HEK293 (cell line): ENCODE measurements at regions of chr1 and their contacts with region 1.

Region 1: DNA sequence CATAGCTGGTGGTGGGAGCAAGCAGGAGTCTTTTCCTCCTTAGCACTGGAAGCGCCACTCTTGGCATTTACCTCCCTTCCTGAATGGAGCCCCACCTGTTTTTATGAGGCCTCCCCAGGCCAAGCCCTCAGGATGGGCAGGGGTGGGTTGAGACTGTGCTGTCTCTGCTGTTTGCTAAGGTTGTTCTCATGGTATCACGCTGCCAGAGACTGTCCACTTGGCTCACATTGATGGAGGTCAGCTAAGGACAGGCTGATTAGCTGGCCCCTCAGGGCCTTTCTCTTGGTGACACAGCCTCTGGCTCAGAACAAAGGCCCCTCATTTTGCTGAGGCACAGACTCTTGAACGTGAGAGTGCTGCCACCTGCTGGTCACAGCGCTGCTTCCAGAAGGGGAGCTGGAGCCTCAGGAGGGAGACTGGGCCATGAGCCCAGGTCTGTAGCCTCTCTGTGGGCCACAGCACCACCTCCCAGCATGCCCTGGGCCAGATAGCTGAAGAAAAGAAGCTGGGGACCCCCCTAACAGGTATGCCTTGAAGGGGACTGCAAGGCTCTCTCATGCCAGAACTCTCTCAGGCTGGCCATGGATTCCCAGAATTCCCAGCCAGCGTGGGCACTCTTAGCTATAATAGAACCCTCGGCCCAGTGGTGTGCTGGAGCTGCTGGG is 85.6 kb downstream of the CD58 start:
- H3K4me3 ChIP-seq: no peak overlapping the region
- H3K27ac ChIP-seq: no peak overlapping the region
- H3K4me1 ChIP-seq: no peaks in the 10 kb centered on the region
- CTCF ChIP-seq: peak; percentile 80

Region 2: DNA sequence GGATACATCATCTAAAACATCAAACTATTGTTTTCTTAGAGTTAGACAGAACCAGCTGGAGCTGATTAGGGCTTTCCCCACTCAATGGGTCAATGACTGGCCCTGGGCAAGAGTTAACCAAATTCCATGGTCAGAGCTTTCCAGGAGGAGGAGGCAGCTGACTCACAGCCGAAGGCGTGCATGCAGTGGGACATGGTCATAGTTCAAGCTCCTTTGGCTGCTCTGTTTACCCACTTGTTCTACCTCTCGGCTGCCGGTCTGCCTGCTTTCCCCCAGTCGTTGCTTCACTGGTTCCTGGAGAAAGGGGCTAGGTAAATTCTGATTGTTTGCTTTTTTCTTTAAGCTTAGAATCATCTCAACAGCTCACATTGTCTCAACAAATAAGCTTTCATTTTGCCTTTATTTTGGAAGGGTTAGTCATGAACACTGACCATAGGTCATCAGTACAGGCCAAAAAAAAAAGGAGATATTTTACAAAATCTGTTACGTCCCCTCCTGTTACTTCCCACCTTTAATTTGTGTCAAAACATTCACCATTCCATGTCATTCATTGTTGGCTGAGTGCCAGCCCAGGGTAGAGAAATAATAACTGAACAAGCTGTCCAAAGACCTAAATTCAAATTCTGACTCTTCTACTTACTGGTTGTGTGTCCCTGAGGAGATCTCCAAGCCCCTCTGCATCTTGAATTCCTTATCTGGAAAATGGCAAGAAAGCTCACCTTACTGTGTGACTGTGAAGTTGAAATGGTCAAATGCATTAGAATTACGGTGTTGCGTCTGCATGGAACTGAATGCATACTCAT is 362.0 kb before region 1 on chr1:
- CTCF ChIA-PET with region 1: interaction called, 22 read pairs
- POLR2A ChIA-PET with region 1: no interaction called
- H3K4me3 ChIP-seq: no peak overlapping the region
- H3K27ac ChIP-seq: no peak overlapping the region
- H3K4me1 ChIP-seq: no peaks in the 10 kb centered on the region
- CTCF ChIP-seq: no peak

Region 3: DNA sequence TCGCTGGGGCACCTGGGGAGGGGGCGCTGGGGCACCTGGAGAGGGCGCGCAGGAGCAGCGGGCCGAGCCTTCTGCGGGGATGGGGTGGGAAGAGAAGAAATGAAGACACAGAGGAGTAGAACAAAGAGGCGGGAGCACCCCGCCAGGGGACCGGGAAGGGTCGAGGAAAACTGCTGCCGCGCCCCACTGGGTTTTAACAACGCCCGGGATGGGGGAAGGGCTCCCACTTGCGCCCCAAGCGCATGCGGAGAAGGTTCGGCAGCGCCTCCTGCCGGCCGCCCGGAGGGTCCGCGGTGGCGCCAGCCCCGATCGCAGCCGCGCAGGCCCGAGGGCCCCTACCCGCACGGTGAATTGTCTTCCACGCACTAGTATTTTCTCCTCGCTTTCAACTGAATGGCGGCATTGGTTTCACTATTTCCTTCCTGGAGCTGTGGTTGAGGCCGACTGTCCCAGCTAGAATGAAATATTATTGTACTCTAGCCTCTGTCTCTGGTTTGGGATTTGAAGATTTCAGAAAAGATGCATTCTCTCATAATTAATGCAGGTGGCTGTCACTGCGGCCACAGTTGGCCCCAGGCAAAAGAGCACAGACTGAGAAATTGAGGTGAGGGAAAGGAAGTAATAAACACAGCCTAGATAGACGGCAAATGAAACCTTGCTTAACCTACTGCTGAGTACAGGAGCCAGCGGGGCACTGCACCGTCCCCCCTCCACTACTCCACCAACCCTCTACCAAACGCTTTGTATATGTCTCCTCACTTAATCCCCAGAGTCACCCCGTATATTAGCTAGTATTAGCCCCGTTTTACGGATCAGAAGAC is 316.7 kb before region 1 on chr1:
- CTCF ChIA-PET with region 1: interaction called, 11 read pairs
- POLR2A ChIA-PET with region 1: no interaction called
- H3K4me3 ChIP-seq: peak overlapping the region; percentile 27
- H3K27ac ChIP-seq: no peak overlapping the region; the same call in 1 of the 2 replicates
- H3K4me1 ChIP-seq: no peaks in the 10 kb centered on the region
- CTCF ChIP-seq: peak; percentile 31; the same call in 1 of the 2 replicates

Region 4: DNA sequence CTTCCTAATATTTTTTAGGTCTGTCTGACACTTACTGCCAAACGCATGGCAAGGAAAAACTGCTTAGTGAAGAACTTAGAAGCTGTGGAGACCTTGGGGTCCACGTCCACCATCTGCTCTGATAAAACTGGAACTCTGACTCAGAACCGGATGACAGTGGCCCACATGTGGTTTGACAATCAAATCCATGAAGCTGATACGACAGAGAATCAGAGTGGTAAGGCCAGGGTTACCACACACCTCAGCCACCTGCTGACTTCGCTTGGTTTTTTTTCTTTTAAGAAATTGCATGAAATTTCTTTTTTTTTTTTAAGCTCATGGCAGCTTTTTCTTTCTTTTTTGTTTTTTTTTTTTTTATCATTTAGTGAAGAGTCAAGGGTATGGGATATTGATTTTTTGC is 95.0 kb before region 1 on chr1:
- CTCF ChIA-PET with region 1: interaction called, 12 read pairs
- POLR2A ChIA-PET with region 1: no interaction called
- H3K4me3 ChIP-seq: no peak overlapping the region
- H3K27ac ChIP-seq: no peak overlapping the region
- H3K4me1 ChIP-seq: no peaks in the 10 kb centered on the region
- CTCF ChIP-seq: no peak

Region 5: DNA sequence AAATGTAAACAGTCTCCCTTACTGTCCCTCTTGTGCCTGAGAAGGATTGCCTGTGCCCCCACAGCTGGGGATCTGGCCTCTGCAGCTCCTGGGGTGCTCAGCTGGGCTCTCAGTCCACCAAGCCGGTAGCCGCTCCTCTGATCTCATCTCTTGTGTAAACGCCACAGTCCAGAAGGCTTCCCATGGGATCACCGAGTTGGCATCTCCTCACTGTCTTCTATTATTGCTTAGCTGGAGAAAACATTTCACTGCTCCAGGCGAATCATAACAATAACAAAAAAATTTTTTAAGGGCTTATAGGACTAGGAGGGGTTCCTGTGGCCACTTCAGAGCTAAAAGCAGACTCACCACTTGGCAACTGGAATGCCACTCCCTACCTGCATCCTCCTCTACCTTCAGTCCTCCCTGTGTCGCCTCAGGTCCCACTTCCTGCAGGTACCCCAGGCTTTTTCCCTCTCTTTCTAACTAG is 36.4 kb before region 1 on chr1:
- CTCF ChIA-PET with region 1: interaction called, 17 read pairs
- POLR2A ChIA-PET with region 1: no interaction called
- H3K4me3 ChIP-seq: no peak overlapping the region
- H3K27ac ChIP-seq: no peak overlapping the region
- H3K4me1 ChIP-seq: peaks cover 3% of the 10 kb centered on the region; the same call in 1 of the 2 replicates
- CTCF ChIP-seq: no peak

Region 6: DNA sequence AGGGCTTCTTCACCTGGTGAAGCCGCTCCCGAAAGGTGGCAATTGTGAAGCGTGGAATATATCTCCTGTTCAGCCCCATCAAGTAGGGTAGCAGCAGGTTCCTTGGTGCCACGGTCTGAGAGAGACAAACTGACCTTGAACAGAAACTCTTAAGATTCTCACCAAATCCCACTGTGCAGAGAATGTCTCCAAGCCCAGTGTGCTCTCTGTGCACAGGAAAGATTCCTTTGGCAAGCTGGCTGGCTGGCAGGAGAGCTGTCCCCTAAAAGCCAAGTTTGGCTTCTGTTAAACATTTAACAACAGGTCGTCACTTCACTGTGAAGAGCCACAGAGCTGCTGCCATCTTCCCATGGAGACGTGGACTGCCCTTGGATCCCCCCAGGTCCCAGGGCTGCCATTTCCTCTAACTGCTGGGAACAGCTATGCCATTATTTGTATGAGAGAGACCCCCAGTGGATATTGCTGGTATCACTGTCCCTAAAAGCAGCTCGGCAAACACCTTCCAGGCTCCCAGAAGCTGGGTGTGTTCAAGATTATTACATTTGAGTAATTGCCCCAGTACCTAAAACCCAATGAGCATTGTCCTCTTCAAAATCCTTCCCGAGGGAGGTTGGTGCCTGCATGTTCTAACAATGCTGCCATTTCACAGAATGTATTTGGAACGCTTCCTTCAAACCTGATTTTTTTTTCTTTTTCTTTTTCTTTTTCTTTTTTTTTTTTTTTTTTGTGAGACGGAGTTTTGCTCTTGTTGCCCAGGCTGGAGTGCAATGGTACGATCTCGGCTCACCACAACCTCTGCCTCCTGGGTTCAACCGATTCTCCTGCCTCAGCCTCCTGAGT is 13.8 kb after region 1 on chr1:
- CTCF ChIA-PET with region 1: interaction called, 127 read pairs
- POLR2A ChIA-PET with region 1: interaction called, 6 read pairs
- H3K4me3 ChIP-seq: no peak overlapping the region
- H3K27ac ChIP-seq: no peak overlapping the region
- H3K4me1 ChIP-seq: no peaks in the 10 kb centered on the region
- CTCF ChIP-seq: peak; percentile 85